Aorta (tissue), 5 donors: ENCODE measurements at regions of chr11 and their contacts with region 1.

Region 1: GRCh38 chr11:130861902-130862860 is 54.1 kb downstream of the SNX19 start:
- DNase-seq: peak; percentile 94 to 98
- ATAC-seq: peak; percentile 92
- H3K4me3 ChIP-seq: no peak overlapping the region
- H3K27ac ChIP-seq: peak overlapping the region; percentile 10 to 74
- H3K4me1 ChIP-seq: peaks cover 0 to 6% of the 10 kb centered on the region in 2 donors
- H3K27me3 ChIP-seq: no peaks in the 10 kb centered on the region

Region 2: DNA sequence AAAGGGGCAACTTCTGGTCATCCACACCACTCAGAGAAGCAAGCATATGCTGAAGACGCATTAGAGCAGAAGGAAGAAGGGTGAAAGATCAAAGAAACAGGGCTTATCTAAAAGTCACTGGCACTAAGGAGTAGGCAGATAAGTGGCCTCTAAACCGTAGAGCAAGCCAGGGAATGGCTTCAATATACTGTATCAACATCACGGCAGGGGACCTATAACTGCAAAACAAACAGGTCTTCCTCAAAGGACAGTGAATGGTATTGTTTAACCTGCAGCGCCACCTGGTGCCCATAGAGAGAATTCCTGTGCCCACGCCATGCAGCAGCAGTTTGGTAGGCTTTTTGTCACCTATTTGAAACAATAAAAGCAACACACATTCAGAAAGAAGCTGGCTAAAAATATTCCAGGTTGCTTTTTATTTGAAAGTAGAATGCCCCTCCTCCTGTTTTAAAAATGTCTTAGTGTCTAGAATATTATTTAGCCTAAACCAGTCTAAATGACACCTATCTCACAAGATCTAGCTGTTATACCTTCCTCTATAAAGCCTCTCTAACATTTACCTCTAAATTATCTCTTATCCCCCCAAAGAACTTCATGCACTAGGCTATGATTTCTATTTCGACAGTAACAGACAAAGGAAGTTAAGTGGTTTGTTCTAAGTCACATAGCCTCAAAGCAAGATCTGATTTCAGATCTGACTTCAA is 32.3 kb after region 1 on chr11:
- intact Hi-C with region 1: loop called (anchors 1 to 2 kb)
- DNase-seq: peak; percentile 70 to 87
- ATAC-seq: peak; percentile 73
- H3K4me3 ChIP-seq: no peak overlapping the region
- H3K27ac ChIP-seq: peak overlapping the region; percentile 16 to 90
- H3K4me1 ChIP-seq: peaks cover 0 to 2% of the 10 kb centered on the region in 2 donors
- H3K27me3 ChIP-seq: no peaks in the 10 kb centered on the region

Region 3: DNA sequence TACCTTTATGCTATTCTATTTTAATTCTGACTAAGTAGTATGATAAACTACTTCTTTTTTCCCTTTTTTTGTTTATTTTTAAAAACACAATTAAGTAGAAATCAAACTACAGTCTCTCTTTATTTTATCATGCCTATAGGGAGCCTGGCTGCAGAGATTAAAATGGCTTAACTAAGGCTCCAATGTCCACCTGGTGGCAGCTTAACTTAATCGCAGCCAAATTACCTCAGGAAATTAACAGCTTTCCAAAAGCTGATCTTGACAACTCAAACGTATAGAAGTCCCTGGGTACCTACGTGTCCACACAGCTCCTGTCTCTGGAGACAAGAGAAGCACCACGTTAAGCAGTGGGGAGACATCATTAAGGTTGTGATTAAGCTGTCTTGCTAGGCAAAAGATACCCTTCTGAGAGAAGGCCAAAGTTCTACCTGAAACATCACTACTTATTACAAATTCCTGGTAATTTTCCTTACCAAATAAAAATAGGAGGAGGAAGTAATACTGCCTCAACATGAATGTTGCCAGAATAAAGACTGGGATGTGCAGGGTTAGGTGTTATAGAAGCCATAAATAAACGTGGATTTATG is 117.3 kb after region 1 on chr11:
- intact Hi-C with region 1: no loop called
- DNase-seq: no peak
- ATAC-seq: no peak
- H3K4me3 ChIP-seq: no peak overlapping the region
- H3K27ac ChIP-seq: no peak overlapping the region
- H3K4me1 ChIP-seq: no peaks in the 10 kb centered on the region
- H3K27me3 ChIP-seq: no peaks in the 10 kb centered on the region